Right lobe of liver (tissue), 6 donors: ENCODE measurements at regions of chr4 and their contacts with region 1.

Region 1: GRCh38 chr4:8468746-8469535 is 28.4 kb downstream of the TRMT44 start:
- DNase-seq: peak; percentile 67 to 76 (median 68)
- ATAC-seq: peak; percentile 75 to 90 (median 84)
- H3K4me3 ChIP-seq: no peak overlapping the region
- H3K27ac ChIP-seq: no peak overlapping the region
- H3K4me1 ChIP-seq: no peaks in the 10 kb centered on the region
- H3K27me3 ChIP-seq: no peaks in the 10 kb centered on the region
- CTCF ChIP-seq: peak; percentile 76 to 90 (median 85)
- POLR2A ChIP-seq: no peak

Region 2: GRCh38 chr4:8586671-8587455 is 117.9 kb after region 1 on chr4:
- intact Hi-C with region 1: loop called (anchors 5 to 10 kb)
- DNase-seq: peak in 2 of 3 donors; percentile 13 to 39
- ATAC-seq: peak in 1 of 4 donors; percentile 28
- H3K4me3 ChIP-seq: no peak overlapping the region
- H3K27ac ChIP-seq: no peak overlapping the region
- H3K4me1 ChIP-seq: no peaks in the 10 kb centered on the region
- H3K27me3 ChIP-seq: no peaks in the 10 kb centered on the region
- CTCF ChIP-seq: peak in 1 of 4 donors; percentile 12
- POLR2A ChIP-seq: no peak

Region 3: GRCh38 chr4:8594097-8595038 is 125.4 kb after region 1 on chr4:
- intact Hi-C with region 1: loop called (anchors 5 to 10 kb)
- DNase-seq: peak in 2 of 3 donors; percentile 40 to 65
- ATAC-seq: peak; percentile 70 to 89 (median 82)
- H3K4me3 ChIP-seq: no peak overlapping the region
- H3K27ac ChIP-seq: no peak overlapping the region
- H3K4me1 ChIP-seq: no peaks in the 10 kb centered on the region
- H3K27me3 ChIP-seq: no peaks in the 10 kb centered on the region
- CTCF ChIP-seq: peak; percentile 43 to 59 (median 56)
- POLR2A ChIP-seq: no peak

Region 4: DNA sequence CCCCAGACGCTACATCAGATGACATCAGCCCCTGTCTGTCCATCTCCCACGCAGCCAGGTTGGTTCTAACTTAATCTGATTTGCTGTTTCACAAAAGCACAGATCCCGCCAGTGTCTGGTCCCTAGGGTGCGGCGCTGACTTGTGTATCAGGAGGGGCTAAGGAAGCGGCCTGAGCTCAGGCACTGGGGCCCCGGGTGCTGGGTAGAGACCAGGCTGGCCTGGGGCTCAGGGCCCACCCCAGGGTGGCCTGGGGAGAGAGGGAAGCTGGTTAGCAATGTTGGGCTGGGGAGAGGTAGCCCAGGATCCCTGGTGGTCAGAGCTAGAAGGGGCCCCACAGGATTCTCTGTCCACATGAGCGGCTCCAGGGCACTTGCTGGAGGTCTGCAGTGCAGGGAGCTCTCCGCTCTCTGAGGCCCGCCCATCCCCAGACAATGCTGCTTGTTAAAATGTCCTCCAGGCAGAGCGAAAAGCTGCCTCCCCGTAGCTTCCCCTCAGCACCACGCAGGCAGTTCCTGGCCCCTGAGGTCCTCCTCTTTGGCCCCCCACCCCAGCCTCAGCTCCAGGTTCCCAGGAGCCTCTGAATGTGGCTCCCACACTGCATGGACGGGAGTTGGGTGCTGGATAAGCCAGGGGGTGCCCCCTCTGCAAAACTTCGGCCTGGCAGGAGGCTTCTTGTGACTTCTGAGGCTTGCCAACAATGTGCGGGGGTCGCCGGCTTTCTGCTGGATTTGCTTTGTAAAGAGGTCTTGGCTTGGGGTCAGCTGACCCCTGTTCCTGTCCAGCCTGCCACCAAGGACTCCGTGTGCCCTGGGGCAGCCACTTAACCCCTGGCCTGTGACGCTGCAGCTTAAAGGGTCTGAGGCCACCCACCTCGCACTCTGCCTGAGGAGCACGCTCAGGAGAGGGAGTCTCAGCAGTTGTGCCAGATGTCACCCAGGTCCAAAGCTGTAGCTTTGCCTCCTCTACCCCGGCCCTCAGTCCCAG is 236.5 kb after region 1 on chr4:
- intact Hi-C with region 1: no loop called
- DNase-seq: peak in 2 of 3 donors; percentile 10 to 40
- ATAC-seq: no peak
- H3K4me3 ChIP-seq: no peak overlapping the region
- H3K27ac ChIP-seq: no peak overlapping the region
- H3K4me1 ChIP-seq: no peaks in the 10 kb centered on the region
- H3K27me3 ChIP-seq: no peaks in the 10 kb centered on the region
- CTCF ChIP-seq: no peak
- POLR2A ChIP-seq: no peak